ENCODE measurements at regions of chr14 and their contacts with region 1.

Region 1: GRCh38 chr14:77320238-77320935 is at the start of gene POMT2:
- DNase-seq: peak; percentile 97
- H3K4me3 ChIP-seq: peak within 1 kb of the TSS; percentile 74 to 100 (median 89)
- H3K27ac ChIP-seq: peak within 1 kb of the TSS; percentile 94 to 99 (median 97)
- H3K4me1 ChIP-seq: peaks cover 23 to 41% (median 32%) of the 10 kb centered on the region in 4 donors
- H3K27me3 ChIP-seq: no peaks in the 10 kb centered on the region
- CTCF ChIP-seq: peak; percentile 59 to 67 (median 67)
- EP300 ChIP-seq: no peak
- POLR2A ChIP-seq: peak; percentile 34
- total RNA-seq, gene POMT2: 13.3 to 29.2 (median 14.5) TPM

Region 2: GRCh38 chr14:76894308-76894892 is 426.0 kb before region 1 on chr14:
- intact Hi-C with region 1: no loop called
- DNase-seq: no peak
- H3K4me3 ChIP-seq: no peak overlapping the region
- H3K27ac ChIP-seq: no peak overlapping the region
- H3K4me1 ChIP-seq: no peaks in the 10 kb centered on the region
- H3K27me3 ChIP-seq: no peaks in the 10 kb centered on the region
- CTCF ChIP-seq: no peak
- EP300 ChIP-seq: no peak
- POLR2A ChIP-seq: no peak

Region 3: DNA sequence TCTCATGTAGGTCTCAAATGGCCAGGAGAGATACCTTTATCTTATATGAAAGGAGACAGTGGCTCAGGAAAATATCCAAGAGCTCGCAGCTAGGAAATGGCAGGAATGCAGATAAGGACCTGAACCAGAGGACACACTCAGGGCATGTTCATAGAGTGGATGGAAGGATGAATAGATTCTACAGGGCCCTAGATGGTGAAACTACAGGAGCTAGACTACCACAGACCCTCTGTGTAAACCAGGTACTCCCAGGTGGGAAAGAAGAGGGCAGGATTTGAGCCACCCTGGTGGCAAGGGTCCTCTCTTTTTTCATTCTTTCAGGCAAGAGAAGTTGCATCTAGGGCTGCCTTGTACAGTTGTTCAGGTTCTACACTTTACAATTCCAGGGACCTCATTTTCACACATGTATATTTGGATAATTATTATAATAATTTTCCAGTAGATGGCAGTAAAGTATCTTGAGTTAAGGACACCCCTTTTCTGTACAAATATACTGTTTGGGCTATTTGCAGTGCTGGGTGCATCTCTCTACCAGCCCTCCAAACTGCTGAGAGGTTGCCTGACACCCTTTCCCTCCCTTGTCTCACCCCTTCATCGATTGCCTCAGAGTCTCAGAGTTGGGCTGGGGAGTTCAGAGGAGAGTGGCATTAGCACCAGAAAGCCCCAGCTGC is 168.3 kb before region 1 on chr14:
- intact Hi-C with region 1: loop called (anchors 5 kb)
- DNase-seq: no peak
- H3K4me3 ChIP-seq: no peak overlapping the region
- H3K27ac ChIP-seq: no peak overlapping the region
- H3K4me1 ChIP-seq: no peaks in the 10 kb centered on the region
- H3K27me3 ChIP-seq: peaks cover 0 to 38% (median 1%) of the 10 kb centered on the region in 4 donors
- CTCF ChIP-seq: peak in 2 of 3 experiments; percentile 23 to 32
- EP300 ChIP-seq: no peak
- POLR2A ChIP-seq: no peak

Region 4: GRCh38 chr14:77260631-77261030 is 59.8 kb before region 1 on chr14:
- intact Hi-C with region 1: no loop called
- DNase-seq: no peak
- H3K4me3 ChIP-seq: no peak overlapping the region
- H3K27ac ChIP-seq: no peak overlapping the region
- H3K4me1 ChIP-seq: no peaks in the 10 kb centered on the region
- H3K27me3 ChIP-seq: peaks cover 0 to 41% (median 0%) of the 10 kb centered on the region in 4 donors
- CTCF ChIP-seq: no peak
- EP300 ChIP-seq: no peak
- POLR2A ChIP-seq: no peak

Region 5: GRCh38 chr14:77376771-77377501 is 56.5 kb after region 1 on chr14 and contains the starts of genes SAMD15 and TMED8:
- intact Hi-C with region 1: loop called (anchors 5 kb)
- DNase-seq: peak; percentile 93
- H3K4me3 ChIP-seq: peak within 1 kb of the TSS; percentile 85 to 95 (median 92)
- H3K27ac ChIP-seq: peak within 1 kb of the TSS; percentile 87 to 89 (median 87)
- H3K4me1 ChIP-seq: peaks cover 14 to 28% (median 21%) of the 10 kb centered on the region in 4 donors
- H3K27me3 ChIP-seq: no peaks in the 10 kb centered on the region
- CTCF ChIP-seq: peak; percentile 12 to 48 (median 19)
- EP300 ChIP-seq: no peak
- POLR2A ChIP-seq: no peak
- total RNA-seq, gene SAMD15: 0.42 to 0.52 (median 0.51) TPM
- total RNA-seq, gene TMED8: 15.2 to 21.8 (median 16.7) TPM

Region 6: GRCh38 chr14:77616454-77617229 is 296.3 kb after region 1 on chr14 and contains the start of gene SPTLC2:
- intact Hi-C with region 1: loop called (anchors 5 kb)
- DNase-seq: peak; percentile 100
- H3K4me3 ChIP-seq: peak within 1 kb of the TSS; percentile 70 to 95 (median 89)
- H3K27ac ChIP-seq: peak within 1 kb of the TSS; percentile 78 to 91 (median 82)
- H3K4me1 ChIP-seq: peaks cover 14 to 23% (median 17%) of the 10 kb centered on the region in 4 donors
- H3K27me3 ChIP-seq: no peaks in the 10 kb centered on the region
- CTCF ChIP-seq: no peak
- EP300 ChIP-seq: no peak
- POLR2A ChIP-seq: peak; percentile 58
- total RNA-seq, gene SPTLC2: 14.5 to 25.3 (median 20.1) TPM